A673 (cell line): ENCODE measurements at regions of chr17 and their contacts with region 1.

Region 1: DNA sequence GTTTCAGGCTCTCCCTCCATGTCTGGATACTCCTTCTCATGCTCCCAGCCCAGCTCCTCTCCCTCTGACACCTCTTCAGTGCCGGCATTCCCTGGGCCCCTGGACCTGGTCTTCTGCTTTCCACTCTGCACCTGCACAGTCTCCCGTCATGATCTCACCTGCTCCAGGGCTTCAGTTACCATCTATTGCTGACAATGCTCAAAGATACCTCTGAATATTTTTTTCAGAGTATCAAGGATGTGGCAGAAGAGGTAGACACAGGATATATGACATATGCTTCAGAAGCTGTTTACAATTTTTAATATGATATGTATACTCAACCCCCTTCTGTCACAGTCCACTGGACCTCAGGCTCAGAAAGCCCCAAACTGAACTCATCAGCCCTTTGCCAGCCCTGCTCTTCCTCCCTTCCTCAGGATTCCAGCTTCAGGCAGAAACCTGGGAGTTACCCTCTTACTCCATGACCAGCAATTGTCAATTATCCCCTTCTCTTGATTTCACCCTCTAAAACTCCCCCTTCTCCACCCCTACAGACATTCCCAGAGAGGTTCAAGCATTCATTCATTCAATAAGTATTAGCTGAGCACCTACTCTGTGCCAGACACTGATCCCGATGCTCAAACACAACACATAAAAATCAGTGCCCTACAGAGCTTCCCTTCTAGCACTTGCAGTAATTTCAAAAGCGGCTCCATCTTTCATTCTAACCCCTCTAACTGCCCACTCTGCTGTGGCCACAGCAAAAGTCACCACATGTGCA is 7.8 kb upstream of the MLLT6 start:
- DNase-seq: no peak
- H3K4me3 ChIP-seq: no peak overlapping the region
- H3K27ac ChIP-seq: no peak overlapping the region
- H3K4me1 ChIP-seq: no peaks in the 10 kb centered on the region
- H3K27me3 ChIP-seq: no peaks in the 10 kb centered on the region
- CTCF ChIP-seq: no peak

Region 2: GRCh38 chr17:38958756-38959155 is 261.5 kb after region 1 on chr17:
- CTCF ChIA-PET with region 1: no interaction called
- POLR2A ChIA-PET with region 1: no interaction called
- intact Hi-C with region 1: no loop called
- DNase-seq: no peak
- H3K4me3 ChIP-seq: no peak overlapping the region
- H3K27ac ChIP-seq: no peak overlapping the region
- H3K4me1 ChIP-seq: no peaks in the 10 kb centered on the region
- H3K27me3 ChIP-seq: no peaks in the 10 kb centered on the region
- CTCF ChIP-seq: no peak

Region 3: DNA sequence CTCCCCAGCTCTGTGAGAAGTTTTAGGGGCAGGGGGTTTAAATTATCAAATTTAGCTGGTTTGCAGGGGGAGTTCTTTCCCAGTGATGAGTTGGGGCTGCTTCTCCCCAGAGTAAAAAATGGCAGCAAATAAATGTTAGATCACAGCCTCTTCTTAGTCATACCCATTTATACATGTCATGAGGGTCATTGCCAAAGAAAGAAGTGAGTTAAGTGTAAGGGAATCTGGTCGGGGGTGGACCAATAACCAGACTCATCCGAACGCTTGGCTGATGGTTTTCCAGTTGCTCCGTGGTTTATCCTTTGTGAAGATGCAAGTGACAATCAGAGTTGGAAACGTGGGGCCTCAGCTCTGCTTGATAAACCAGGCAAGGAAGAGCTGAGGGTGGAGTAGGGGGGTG is 367.1 kb after region 1 on chr17:
- CTCF ChIA-PET with region 1: interaction called, 10 read pairs
- POLR2A ChIA-PET with region 1: no interaction called
- intact Hi-C with region 1: no loop called
- DNase-seq: no peak
- H3K4me3 ChIP-seq: no peak overlapping the region
- H3K27ac ChIP-seq: no peak overlapping the region
- H3K4me1 ChIP-seq: no peaks in the 10 kb centered on the region
- H3K27me3 ChIP-seq: no peaks in the 10 kb centered on the region
- CTCF ChIP-seq: no peak